Spleen (tissue), 13 donors: ENCODE measurements at regions of chr4 and their contacts with region 1.

Region 1: GRCh38 chr4:140637836-140638235 is 69.1 kb upstream of the UCP1 start:
- DNase-seq: no peak
- H3K4me3 ChIP-seq: no peak overlapping the region
- H3K27ac ChIP-seq: no peak overlapping the region
- H3K4me1 ChIP-seq: peaks cover 0 to 21% (median 0%) of the 10 kb centered on the region in 6 donors
- H3K27me3 ChIP-seq: no peaks in the 10 kb centered on the region
- CTCF ChIP-seq: peak in 9 of 11 experiments; percentile 32 to 68 (median 50)
- POLR2A ChIP-seq: no peak

Region 2: GRCh38 chr4:140839888-140840790 is 202.3 kb after region 1 on chr4:
- intact Hi-C with region 1: loop called (anchors 10 kb)
- DNase-seq: no peak
- H3K4me3 ChIP-seq: no peak overlapping the region
- H3K27ac ChIP-seq: no peak overlapping the region
- H3K4me1 ChIP-seq: peaks cover 3 to 20% (median 6%) of the 10 kb centered on the region in 6 donors
- H3K27me3 ChIP-seq: no peaks in the 10 kb centered on the region
- CTCF ChIP-seq: no peak
- POLR2A ChIP-seq: no peak